ENCODE measurements at regions of chr12 and their contacts with region 1.

Region 1: DNA sequence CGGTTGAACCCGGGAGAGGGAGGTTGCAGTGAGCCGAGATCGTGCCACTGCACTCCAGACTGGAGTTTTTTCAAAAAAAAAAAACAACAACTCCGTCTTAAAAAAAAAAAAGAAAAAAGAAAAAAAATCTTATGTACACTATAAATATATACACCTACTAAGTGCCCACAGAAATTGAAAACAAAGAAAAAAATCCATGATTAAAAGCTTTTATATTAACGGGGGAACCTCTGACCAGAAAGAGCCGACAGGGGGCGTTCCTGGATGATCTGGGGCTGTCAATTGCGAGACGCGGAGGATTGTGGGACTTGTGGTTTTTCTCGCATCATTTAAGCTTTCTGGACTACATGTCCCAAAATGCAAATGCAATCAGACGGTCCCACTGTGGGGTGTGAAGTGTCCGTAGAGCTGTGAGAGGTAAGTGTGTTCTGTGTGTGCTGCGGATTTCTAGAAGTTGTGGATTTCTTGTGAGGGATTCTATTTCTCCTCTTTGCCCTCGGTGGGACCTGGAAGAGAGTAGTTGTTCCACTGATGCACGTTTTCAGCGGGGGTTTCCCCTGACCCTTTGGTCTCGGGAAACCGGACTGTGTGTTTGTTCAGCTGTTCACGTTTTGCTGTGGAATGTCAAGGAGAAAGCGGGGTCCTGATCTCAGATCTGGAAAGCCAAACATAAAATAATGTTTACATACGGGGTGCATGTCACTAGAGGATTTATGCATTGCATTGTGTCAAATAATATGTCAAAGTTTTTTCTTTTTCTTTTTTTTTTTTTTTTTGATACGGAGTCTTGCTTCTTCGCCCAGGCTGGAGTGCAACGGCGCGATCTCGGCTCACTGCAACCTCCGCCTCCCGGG is at the start of gene SIRT4:
- DNase-seq: peak; percentile 89
- ATAC-seq: peak; percentile 95
- H3K4me3 Mint-ChIP-seq: peak within 1 kb of the TSS; percentile 95
- H3K27ac Mint-ChIP-seq: peak within 1 kb of the TSS; percentile 91
- H3K4me1 Mint-ChIP-seq: peaks cover 6% of the 10 kb centered on the region; the same call in 1 of the 2 replicates
- H3K27me3 Mint-ChIP-seq: peaks cover 3% of the 10 kb centered on the region; the same call in 1 of the 2 replicates
- CTCF ChIP-seq: peak; percentile 52; the same call in 1 of the 2 replicates
- total RNA-seq, gene SIRT4: 2.1 to 4.3 TPM (median 2.8 TPM) in 3 replicates

Region 2: GRCh38 chr12:119988264-119988781 is 313.9 kb before region 1 on chr12:
- CTCF ChIA-PET with region 1: no interaction called
- POLR2A ChIA-PET with region 1: no interaction called
- DNase-seq: no peak
- ATAC-seq: no peak
- H3K4me3 Mint-ChIP-seq: peak overlapping the region; percentile 81
- H3K27ac Mint-ChIP-seq: peak overlapping the region; percentile 97
- H3K4me1 Mint-ChIP-seq: peaks cover 26% of the 10 kb centered on the region
- H3K27me3 Mint-ChIP-seq: peaks cover 19% of the 10 kb centered on the region
- CTCF ChIP-seq: no peak

Region 3: DNA sequence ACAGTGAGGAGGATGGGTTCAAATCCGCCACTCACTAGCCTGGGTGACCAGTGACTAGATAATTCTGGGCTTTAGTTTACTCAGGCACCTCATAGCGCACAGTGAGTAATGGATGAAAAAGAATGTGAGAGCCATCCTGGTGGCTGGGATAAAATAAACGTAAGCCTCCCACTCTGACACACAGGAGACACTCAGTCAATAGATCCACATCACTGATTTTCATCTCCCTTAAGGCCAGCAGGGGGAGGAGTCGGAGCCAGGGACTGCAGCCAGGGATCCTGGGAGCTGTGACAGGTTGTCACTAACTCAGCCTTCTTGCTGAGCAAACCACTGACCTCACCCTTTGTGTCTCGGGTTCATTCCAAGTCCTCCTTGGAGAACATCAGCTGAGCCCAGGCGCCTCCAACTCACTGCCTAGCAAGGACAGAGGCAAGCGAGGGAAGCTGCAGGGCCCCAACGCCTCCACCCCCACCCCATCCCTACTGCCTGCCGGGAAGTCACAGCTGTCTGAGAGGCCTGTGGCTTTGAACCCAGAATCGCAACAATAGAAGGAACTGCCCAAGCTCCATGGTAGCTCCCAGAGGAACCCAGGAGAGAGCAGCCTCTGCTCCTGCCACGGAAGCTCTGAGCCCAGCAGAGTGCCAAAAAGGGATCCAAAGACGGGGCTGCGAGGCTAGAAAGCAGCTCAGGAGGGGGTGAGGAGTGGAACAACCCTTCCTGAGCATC is 67.4 kb before region 1 on chr12:
- CTCF ChIA-PET with region 1: interaction called, 51 read pairs
- POLR2A ChIA-PET with region 1: interaction called, 3 read pairs
- DNase-seq: peak; percentile 36
- ATAC-seq: peak; percentile 2
- H3K4me3 Mint-ChIP-seq: no peak overlapping the region
- H3K27ac Mint-ChIP-seq: peak overlapping the region; percentile 80
- H3K4me1 Mint-ChIP-seq: peaks cover 73% of the 10 kb centered on the region
- H3K27me3 Mint-ChIP-seq: no peaks in the 10 kb centered on the region
- CTCF ChIP-seq: no peak

Region 4: DNA sequence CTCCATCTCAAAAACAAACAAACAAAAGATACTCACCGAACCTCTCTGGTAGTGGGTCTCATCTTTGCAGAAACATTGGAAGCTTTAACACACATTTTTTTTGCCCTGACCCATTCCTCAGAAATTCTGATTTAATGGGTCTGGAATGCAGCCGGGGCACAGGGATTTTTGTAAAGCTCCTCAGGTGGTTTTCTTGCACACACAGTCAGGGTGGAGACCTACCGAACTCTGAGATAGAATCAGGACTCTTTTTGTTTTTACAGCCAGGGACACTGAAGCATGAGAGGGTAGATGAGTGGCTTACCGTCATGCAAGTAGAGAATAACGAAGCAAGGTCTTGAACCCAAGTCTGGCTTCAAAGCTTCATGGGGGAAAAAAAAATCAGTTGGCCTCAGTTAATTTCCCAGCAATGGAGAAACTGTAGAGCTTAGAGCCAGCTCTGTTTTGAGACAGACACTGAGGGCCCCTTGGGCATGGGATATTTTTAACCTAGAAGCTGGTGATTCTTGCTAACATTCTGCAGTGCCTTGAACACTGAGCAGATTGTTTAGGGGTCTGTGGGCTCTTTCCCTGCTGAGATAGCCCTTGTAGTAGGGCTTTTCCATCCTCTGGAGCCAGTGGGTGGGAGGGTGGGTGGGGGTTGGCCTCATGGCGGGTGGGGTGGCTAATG is 15.3 kb before region 1 on chr12:
- CTCF ChIA-PET with region 1: interaction called, 62 read pairs
- POLR2A ChIA-PET with region 1: interaction called, 21 read pairs
- DNase-seq: no peak
- ATAC-seq: no peak
- H3K4me3 Mint-ChIP-seq: no peak overlapping the region
- H3K27ac Mint-ChIP-seq: no peak overlapping the region
- H3K4me1 Mint-ChIP-seq: peaks cover 20% of the 10 kb centered on the region
- H3K27me3 Mint-ChIP-seq: no peaks in the 10 kb centered on the region; the same call in 1 of the 2 replicates
- CTCF ChIP-seq: no peak

Region 5: DNA sequence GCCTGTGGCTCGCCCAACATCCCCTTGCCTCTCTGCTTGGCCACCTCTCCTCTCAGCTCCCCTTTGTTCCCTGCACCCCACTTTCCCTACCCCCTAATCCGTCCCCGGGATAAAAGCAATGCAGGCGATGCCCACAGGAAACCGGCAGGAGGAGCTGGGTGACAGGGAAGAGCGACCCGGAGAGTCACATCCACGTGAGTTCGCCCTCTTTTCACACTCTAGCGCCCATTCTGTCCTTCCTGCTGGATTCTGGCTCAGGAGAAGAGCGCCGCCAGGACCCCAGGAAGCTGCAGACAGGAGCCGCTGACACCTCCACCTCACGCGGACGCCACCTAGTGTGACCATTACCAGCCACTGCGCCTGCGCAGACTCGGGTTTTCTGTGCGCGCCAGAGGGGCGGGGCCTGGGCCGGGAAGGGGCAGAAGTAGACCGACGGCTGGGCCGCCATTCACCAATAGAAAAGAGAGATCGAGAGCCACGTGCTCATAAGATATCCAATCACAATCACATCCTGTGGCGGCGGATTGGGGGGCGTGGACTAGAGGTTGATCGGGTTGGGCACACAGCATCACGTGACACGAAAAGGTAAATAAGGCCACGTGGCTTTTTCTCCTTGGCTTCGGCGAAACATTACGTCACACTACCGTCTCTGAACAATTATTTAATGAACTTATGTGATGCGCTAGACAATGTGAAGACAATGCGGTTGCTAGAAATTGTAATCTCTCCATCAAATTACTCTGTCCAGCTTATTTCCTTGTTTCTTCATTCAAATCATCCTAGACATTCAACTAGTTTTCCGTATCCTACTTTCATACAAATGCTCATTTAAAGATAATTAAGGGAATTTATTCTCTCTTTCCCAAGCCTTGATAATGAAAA is 15.3 kb after region 1 on chr12:
- CTCF ChIA-PET with region 1: interaction called, 125 read pairs
- POLR2A ChIA-PET with region 1: interaction called, 4 read pairs
- DNase-seq: peak; percentile 100
- ATAC-seq: peak; percentile 98
- H3K4me3 Mint-ChIP-seq: peak overlapping the region; percentile 80
- H3K27ac Mint-ChIP-seq: peak overlapping the region; percentile 68
- H3K4me1 Mint-ChIP-seq: peaks cover 11% of the 10 kb centered on the region
- H3K27me3 Mint-ChIP-seq: peaks cover 5% of the 10 kb centered on the region
- CTCF ChIP-seq: no peak

Region 6: DNA sequence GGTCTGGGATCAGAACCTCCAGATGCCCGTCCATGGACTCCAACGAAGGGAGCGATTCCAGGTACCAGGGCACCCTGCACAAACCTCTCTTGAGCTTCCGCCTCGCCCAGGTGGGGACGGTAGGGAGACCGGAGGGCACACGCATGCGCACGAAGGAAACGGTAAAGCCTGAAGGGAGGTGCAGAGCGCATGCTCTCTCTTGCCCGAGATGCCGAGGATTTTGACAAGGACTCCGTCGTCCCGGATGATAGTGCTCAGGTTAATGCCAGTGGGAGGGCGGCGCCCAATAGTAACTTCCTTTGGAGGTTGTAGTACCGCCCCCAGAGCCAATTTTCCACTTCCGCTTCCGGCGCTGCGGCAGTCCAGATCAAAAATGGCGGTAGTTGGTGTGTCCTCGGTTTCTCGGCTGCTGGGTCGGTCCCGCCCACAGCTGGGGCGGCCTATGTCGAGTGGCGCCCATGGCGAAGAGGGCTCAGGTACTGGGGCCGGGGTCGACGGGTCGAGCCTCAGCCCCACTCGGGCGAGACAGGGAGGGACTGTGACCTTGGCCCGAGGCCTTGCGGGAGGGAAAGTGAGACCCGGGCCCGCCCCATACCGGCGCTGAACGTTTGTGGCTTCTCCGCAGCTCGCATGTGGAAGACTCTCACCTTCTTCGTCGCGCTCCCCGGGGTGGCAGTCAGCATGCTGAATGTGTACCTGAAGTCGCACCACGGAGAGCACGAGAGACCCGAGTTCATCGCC is 135.7 kb after region 1 on chr12 and contains the start of gene COX6A1:
- CTCF ChIA-PET with region 1: interaction called, 14 read pairs
- POLR2A ChIA-PET with region 1: no interaction called
- DNase-seq: peak; percentile 97
- ATAC-seq: peak; percentile 96
- H3K4me3 Mint-ChIP-seq: peak within 1 kb of the TSS; percentile 94
- H3K27ac Mint-ChIP-seq: peak within 1 kb of the TSS; percentile 99
- H3K4me1 Mint-ChIP-seq: peaks cover 14% of the 10 kb centered on the region
- H3K27me3 Mint-ChIP-seq: no peaks in the 10 kb centered on the region
- CTCF ChIP-seq: no peak
- total RNA-seq, gene COX6A1: 511 to 573 TPM (median 515 TPM) in 3 replicates